Posterior vena cava (tissue), 2 donors: ENCODE measurements at regions of chr5 and their contacts with region 1.

Region 1: DNA sequence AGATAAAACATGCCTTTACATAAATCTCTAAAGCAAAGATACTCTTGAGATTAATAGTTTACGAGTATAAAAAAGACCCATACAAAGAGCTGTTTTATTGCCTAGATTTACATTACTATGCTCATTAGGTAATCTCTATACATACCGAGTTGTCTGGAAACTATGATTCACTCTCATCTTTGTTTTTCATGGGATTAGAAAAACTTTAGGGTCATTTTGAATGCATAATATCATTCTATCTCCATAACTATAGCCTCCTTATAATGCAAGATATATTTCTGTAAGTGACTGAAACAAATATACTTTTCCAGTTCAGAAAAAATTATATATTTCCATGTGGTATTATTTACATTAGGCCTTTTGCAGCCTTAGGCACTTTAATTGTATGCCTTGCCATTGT is 1088.7 kb upstream of the ARRDC3 start:
- DNase-seq: no peak

Region 2: DNA sequence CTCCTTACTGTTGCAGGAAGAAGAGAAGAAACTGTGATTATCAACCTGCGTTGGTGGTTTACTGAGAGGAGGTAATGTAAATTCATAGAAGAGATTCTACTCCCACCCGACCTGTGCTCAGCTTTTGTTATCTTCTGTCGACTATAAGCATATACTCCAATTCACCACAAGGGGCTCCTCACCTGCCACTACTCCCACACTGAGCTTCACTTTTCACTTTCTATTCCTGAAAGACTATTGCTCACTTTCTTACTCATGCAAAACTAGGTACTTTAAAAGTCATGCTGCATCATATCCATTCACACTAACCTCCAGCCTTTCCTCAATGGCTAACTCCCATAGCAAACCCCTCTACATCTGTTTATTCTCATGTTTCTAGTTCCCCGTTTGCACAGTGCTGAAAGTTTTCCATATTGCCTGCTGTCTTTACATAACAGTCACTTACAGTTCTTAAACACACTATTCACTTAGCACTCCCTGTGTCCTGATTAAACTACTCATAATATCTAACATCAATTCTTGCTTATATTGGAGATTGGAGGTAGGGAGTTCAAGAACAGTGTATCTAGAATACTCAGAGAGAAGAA is 46.5 kb after region 1 on chr5:
- intact Hi-C with region 1: loop called in 1 of 2 experiments (anchors 2 kb)
- DNase-seq: no peak